Prostate gland (tissue), 2 donors: ENCODE measurements at regions of chr1 and their contacts with region 1.

Region 1: GRCh38 chr1:227318003-227318852 is at the start of gene CDC42BPA:
- DNase-seq: peak; percentile 65
- H3K4me3 ChIP-seq: peak within 1 kb of the TSS; percentile 81 to 86
- H3K27ac ChIP-seq: peak within 1 kb of the TSS; percentile 94 to 97
- H3K4me1 ChIP-seq: no peaks in the 10 kb centered on the region
- H3K27me3 ChIP-seq: no peaks in the 10 kb centered on the region
- CTCF ChIP-seq: peak in 1 of 4 experiments; percentile 6
- POLR2A ChIP-seq: peak; percentile 22
- total RNA-seq, gene CDC42BPA: 31.3 to 76.9 TPM

Region 2: GRCh38 chr1:226912587-226913176 is 405.5 kb before region 1 on chr1:
- intact Hi-C with region 1: loop called (anchors 10 kb)
- DNase-seq: peak; percentile 49
- H3K4me3 ChIP-seq: no peak overlapping the region
- H3K27ac ChIP-seq: no peak overlapping the region
- H3K4me1 ChIP-seq: no peaks in the 10 kb centered on the region
- H3K27me3 ChIP-seq: no peaks in the 10 kb centered on the region
- CTCF ChIP-seq: peak; percentile 11 to 69 (median 63)
- POLR2A ChIP-seq: no peak

Region 3: GRCh38 chr1:227343727-227344551 is 25.7 kb after region 1 on chr1:
- intact Hi-C with region 1: no loop called
- DNase-seq: no peak
- H3K4me3 ChIP-seq: no peak overlapping the region
- H3K27ac ChIP-seq: peak overlapping the region; percentile 9 to 43
- H3K4me1 ChIP-seq: peaks cover 4% of the 10 kb centered on the region
- H3K27me3 ChIP-seq: no peaks in the 10 kb centered on the region
- CTCF ChIP-seq: no peak
- POLR2A ChIP-seq: no peak

Region 4: DNA sequence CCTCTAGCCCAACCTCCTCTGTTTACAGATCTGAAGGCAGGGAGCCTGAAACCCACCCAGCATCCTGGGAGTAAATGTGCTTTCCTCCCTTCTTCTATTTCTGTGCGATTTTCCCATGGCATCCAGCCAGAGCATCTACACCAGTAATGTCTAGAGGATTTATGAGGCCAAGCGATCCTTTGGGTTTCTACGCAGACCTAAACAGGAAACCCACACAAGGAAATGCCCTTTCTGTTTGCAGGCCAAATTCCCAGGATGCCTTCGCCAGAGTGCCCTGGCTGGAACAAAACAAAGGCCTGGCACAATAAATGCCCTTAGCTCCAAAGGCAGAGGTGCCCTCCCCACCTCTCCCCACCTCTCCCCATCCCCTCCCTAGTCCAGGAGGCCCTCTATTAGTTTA is 110.6 kb after region 1 on chr1:
- intact Hi-C with region 1: loop called (anchors 2 kb)
- DNase-seq: peak; percentile 41
- H3K4me3 ChIP-seq: no peak overlapping the region
- H3K27ac ChIP-seq: peak overlapping the region; percentile 24 to 31
- H3K4me1 ChIP-seq: no peaks in the 10 kb centered on the region
- H3K27me3 ChIP-seq: peaks cover 2% of the 10 kb centered on the region
- CTCF ChIP-seq: no peak
- POLR2A ChIP-seq: no peak

Region 5: DNA sequence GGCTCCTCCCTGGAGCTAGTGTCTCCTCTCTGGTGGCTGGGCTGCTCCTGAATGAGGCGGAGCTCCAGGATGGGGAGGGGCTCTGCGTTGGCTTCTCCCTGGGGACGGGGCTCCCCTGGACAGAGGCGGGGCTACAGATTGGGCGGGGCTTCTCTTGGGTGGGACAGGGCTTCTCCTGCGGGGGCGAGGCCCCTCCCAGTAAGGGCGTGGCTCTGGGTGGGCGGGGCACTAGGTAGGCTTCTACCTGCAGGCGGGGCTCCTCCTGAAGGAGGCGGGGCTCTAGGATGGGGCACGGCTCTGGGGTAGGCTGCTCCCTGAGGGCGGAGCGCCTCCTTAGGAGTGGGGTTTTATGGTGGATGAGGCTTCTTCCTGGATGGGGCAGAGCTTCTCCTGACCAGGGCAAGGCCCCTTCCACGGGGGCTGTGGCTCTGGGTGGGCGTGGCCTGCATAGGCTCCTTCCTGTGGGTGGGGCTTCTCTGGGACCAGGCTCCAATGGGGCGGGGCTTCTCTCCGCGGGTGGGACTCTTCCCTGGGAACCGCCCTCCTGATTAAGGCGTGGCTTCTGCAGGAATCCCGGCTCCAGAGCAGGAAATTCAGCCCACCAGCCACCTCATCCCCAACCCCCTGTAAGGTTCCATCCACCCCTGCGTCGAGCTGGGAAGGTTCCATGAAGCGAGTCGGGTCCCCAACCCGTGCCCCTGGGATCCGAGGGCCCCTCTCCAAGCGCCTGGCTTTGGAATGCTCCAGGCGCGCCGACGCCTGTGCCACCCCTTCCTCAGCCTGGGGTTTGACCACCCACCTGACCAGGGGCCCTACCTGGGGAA is 741.6 kb after region 1 on chr1:
- intact Hi-C with region 1: no loop called
- DNase-seq: peak; percentile 89
- H3K4me3 ChIP-seq: peak overlapping the region; percentile 3 to 29
- H3K27ac ChIP-seq: no peak overlapping the region
- H3K4me1 ChIP-seq: no peaks in the 10 kb centered on the region
- H3K27me3 ChIP-seq: peaks cover 5% of the 10 kb centered on the region
- CTCF ChIP-seq: no peak
- POLR2A ChIP-seq: peak; percentile 41